ENCODE measurements at regions of chr7 and their contacts with region 1.

Region 1: GRCh38 chr7:117827862-117828261 is 45.4 kb downstream of the CTTNBP2 start:
- DNase-seq: peak; percentile 91
- ATAC-seq: peak; percentile 78
- H3K4me3 ChIP-seq: no peak overlapping the region
- H3K27ac ChIP-seq: peak overlapping the region; percentile 79; the same call in 1 of the 2 replicates
- H3K4me1 ChIP-seq: peaks cover 10% of the 10 kb centered on the region
- H3K27me3 ChIP-seq: no peaks in the 10 kb centered on the region
- CTCF ChIP-seq: no peak
- POLR2A ChIP-seq: no peak
- RAD21 ChIP-seq: no peak

Region 2: DNA sequence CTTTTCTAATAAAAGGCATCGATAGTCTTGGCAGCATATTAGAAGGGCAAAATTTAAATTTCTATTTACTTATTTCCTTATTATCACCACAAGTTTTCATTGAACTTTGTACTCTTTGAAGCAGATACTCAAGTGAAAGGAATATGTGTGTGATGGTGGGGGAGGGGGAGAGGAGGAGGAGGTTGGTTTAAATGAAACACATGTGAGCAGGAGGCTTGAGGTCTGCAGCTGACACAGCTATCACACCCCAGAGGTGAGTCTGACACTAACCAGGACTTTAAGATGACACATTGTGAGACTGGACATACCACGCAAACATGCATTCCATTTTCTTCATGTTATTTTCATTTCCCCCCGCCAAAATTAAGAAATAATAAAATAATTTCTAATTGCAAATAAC is 17.9 kb before region 1 on chr7:
- CTCF ChIA-PET with region 1: interaction called, 3 read pairs
- POLR2A ChIA-PET with region 1: no interaction called
- dilution Hi-C with region 1: no loop called
- in situ Hi-C with region 1: no loop called
- intact Hi-C with region 1: loop called (anchors 2 kb)
- DNase-seq: peak; percentile 4
- ATAC-seq: no peak
- H3K4me3 ChIP-seq: no peak overlapping the region
- H3K27ac ChIP-seq: no peak overlapping the region
- H3K4me1 ChIP-seq: peaks cover 9% of the 10 kb centered on the region
- H3K27me3 ChIP-seq: no peaks in the 10 kb centered on the region
- CTCF ChIP-seq: no peak
- POLR2A ChIP-seq: no peak
- RAD21 ChIP-seq: no peak

Region 3: DNA sequence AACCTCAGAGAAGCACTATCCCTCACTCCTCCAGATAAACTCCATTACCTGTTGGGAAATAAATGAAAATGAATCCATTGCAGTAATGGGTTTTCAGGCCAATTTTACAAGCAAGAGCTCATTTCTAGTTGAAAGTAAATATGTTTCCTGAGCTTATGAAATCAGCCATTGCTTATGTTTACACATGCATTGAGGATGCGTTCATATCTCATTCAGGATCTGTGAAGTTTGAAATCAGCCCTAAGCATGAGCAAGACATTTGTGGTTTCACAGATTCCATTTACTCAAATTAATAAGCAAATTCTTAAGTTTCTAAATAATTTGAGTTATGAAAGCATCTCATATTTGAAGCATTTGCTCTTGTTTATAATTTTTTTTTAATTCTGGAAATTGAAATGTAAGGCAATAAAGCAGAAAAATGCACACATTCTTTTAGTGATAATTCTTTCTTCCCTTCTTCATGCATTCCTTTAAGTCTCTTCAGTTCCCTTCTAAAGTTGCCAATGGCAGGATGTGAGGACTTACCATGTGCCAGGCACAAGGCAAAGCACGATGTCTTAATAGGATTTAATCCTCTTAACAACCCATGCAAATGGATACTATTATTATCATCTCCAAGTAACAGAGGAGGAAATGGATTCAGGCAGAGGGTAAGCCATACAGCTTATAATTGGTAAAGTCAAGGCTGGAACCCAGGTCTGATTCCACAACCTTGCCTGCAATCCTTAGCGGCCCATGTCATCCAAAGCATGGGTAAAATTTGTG is 80.4 kb after region 1 on chr7:
- CTCF ChIA-PET with region 1: no interaction called
- POLR2A ChIA-PET with region 1: interaction called, 13 read pairs
- dilution Hi-C with region 1: no loop called
- in situ Hi-C with region 1: no loop called
- intact Hi-C with region 1: no loop called
- DNase-seq: no peak
- ATAC-seq: no peak
- H3K4me3 ChIP-seq: no peak overlapping the region
- H3K27ac ChIP-seq: no peak overlapping the region
- H3K4me1 ChIP-seq: no peaks in the 10 kb centered on the region
- H3K27me3 ChIP-seq: 0 out of 2 replicates have a peak, but pooled peaks cover 1% of the 10 kb centered on the region
- CTCF ChIP-seq: no peak
- POLR2A ChIP-seq: no peak
- RAD21 ChIP-seq: no peak

Region 4: GRCh38 chr7:117961235-117961634 is 133.4 kb after region 1 on chr7:
- CTCF ChIA-PET with region 1: no interaction called
- POLR2A ChIA-PET with region 1: no interaction called
- dilution Hi-C with region 1: no loop called
- in situ Hi-C with region 1: no loop called
- intact Hi-C with region 1: no loop called
- DNase-seq: no peak
- ATAC-seq: no peak
- H3K4me3 ChIP-seq: no peak overlapping the region
- H3K27ac ChIP-seq: no peak overlapping the region
- H3K4me1 ChIP-seq: no peaks in the 10 kb centered on the region
- H3K27me3 ChIP-seq: no peaks in the 10 kb centered on the region
- CTCF ChIP-seq: no peak
- POLR2A ChIP-seq: no peak
- RAD21 ChIP-seq: no peak

Region 5: GRCh38 chr7:118104812-118105441 is 277.1 kb after region 1 on chr7:
- CTCF ChIA-PET with region 1: no interaction called
- POLR2A ChIA-PET with region 1: no interaction called
- dilution Hi-C with region 1: no loop called
- in situ Hi-C with region 1: no loop called
- intact Hi-C with region 1: no loop called
- DNase-seq: peak; percentile 40
- ATAC-seq: peak; percentile 61
- H3K4me3 ChIP-seq: no peak overlapping the region
- H3K27ac ChIP-seq: no peak overlapping the region
- H3K4me1 ChIP-seq: no peaks in the 10 kb centered on the region
- H3K27me3 ChIP-seq: no peaks in the 10 kb centered on the region
- CTCF ChIP-seq: peak; percentile 58
- POLR2A ChIP-seq: no peak
- RAD21 ChIP-seq: peak; percentile 49